Heart right ventricle (tissue), 16 donors: ENCODE measurements at regions of chr1 and their contacts with region 1.

Region 1: DNA sequence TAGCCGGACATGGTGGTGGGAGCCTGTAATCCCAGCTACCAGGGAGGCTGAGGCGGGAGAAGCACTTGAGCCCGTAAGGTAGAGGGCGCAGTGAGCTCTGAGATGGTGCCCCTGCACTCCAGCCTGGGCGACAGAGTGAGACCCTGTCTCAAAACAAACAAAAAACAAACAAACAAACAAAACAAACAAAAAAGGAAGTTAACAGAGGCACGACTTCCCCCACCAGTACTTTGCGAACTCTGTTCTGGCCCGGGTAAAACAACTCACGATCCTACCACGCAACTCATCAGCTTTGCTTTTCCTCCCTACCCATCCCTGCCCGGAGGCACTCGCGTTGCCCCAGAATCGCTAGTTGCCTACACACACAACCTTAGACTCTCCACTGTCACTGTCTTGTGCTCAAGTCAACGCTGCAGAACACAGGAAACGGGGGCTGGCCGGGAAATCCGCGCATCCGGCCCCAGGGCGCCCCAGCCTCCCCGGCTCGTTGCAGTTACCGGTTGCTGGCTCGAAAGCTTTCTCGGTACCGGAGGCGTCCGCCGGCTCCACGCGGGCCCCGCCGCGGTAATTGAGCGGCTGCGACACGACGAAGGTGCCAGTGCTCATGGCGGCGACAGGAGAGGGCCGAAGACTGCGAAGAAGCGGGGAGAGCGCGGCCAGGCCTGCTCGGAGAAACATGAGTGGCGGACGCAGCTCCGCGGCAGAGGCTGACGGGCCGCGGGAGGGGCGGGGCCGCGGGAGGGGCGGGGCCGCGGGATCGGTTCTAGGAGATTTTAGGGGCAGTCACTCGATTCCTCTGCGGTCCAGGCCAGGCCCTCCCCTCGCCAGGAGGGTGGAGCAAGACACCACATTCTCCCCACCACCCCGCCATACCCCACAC is at the start of gene ALDH9A1:
- DNase-seq: peak; percentile 90 to 92
- ATAC-seq: peak; percentile 97 to 99 (median 97)
- H3K4me3 ChIP-seq: peak within 1 kb of the TSS; percentile 39 to 92 (median 81)
- H3K27ac ChIP-seq: peak within 1 kb of the TSS; percentile 92 to 99 (median 95)
- H3K4me1 ChIP-seq: peaks cover 4 to 39% (median 22%) of the 10 kb centered on the region in 9 donors
- H3K27me3 ChIP-seq: no peaks in the 10 kb centered on the region
- CTCF ChIP-seq: peak in 7 of 9 donors; percentile 17 to 59 (median 42)
- total RNA-seq, gene ALDH9A1: 47.3 to 75.3 (median 66.2) TPM

Region 2: GRCh38 chr1:165376041-165376810 is 321.9 kb before region 1 on chr1:
- intact Hi-C with region 1: loop called in 1 of 10 experiments (anchors 10 kb)
- DNase-seq: peak; percentile 86 to 92
- ATAC-seq: peak; percentile 92 to 98 (median 96)
- H3K4me3 ChIP-seq: peak overlapping the region; percentile 21 to 57 (median 49)
- H3K27ac ChIP-seq: peak overlapping the region; percentile 53 to 94 (median 85)
- H3K4me1 ChIP-seq: peaks cover 0 to 36% (median 28%) of the 10 kb centered on the region in 9 donors
- H3K27me3 ChIP-seq: peaks cover 0 to 77% (median 0%) of the 10 kb centered on the region in 7 donors
- CTCF ChIP-seq: no peak

Region 3: GRCh38 chr1:165619647-165620151 is 78.4 kb before region 1 on chr1:
- intact Hi-C with region 1: no loop called
- DNase-seq: no peak
- ATAC-seq: no peak
- H3K4me3 ChIP-seq: no peak overlapping the region
- H3K27ac ChIP-seq: no peak overlapping the region
- H3K4me1 ChIP-seq: no peaks in the 10 kb centered on the region
- H3K27me3 ChIP-seq: no peaks in the 10 kb centered on the region
- CTCF ChIP-seq: no peak

Region 4: GRCh38 chr1:165630629-165631341 is 67.3 kb before region 1 on chr1 and contains the start of gene MGST3:
- intact Hi-C with region 1: loop called in 5 of 10 experiments (anchors 2 to 5 kb)
- DNase-seq: peak; percentile 94 to 97
- ATAC-seq: peak; percentile 97 to 99 (median 98)
- H3K4me3 ChIP-seq: peak within 1 kb of the TSS; percentile 66 to 96 (median 81)
- H3K27ac ChIP-seq: peak within 1 kb of the TSS; percentile 87 to 97 (median 92)
- H3K4me1 ChIP-seq: peaks cover 0 to 47% (median 35%) of the 10 kb centered on the region in 9 donors
- H3K27me3 ChIP-seq: no peaks in the 10 kb centered on the region
- CTCF ChIP-seq: no peak
- total RNA-seq, gene MGST3: 545 to 1,002 (median 844) TPM

Region 5: DNA sequence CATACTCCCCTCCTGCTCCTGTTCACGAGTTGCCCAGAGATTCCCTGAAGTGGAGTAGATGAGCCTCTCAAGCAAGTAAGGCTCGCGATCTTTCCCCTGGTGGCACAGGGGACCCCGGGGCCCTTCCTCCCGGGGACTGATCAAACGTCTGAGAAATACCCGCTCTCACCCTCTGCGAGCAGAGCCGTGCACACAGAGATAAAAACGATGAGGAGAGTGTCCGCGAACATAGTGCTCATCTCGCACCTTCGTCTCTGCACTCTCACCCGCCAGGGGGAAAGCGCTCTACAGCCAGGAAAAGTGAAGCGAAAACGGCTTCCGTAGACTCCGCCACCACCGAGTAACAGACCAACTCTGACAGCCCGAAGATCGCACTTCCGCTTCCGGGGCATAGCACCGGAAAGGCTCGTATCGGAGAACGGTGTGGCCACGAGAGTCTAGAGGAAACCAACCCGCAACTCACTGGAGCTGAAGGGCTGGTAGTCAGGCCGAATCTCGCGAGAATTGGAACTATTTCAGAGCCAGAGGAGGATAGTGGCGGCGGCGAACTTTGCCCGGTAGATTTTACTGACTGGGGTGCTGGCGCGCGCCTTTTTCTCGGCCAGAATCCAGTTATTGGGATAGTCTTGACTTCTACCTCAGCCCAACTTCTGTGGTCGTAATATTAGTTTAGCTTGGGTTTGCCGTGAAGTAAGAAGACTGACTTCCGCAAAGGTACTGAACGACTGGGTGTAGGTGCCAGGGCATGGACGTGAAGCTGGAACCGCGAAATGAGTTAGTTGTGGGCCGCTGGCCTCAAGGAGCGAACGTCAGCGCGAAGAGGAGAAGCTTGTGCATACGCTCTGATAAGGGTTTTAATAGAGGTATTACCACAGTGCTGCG is 70.6 kb after region 1 on chr1 and contains the start of gene TMCO1:
- intact Hi-C with region 1: loop called in 1 of 10 experiments (anchors 1 kb)
- DNase-seq: peak; percentile 88 to 96
- ATAC-seq: peak; percentile 99 to 100 (median 100)
- H3K4me3 ChIP-seq: peak within 1 kb of the TSS; percentile 45 to 99 (median 77)
- H3K27ac ChIP-seq: peak within 1 kb of the TSS; percentile 18 to 95 (median 89)
- H3K4me1 ChIP-seq: peaks cover 0 to 61% (median 31%) of the 10 kb centered on the region in 9 donors
- H3K27me3 ChIP-seq: no peaks in the 10 kb centered on the region
- CTCF ChIP-seq: peak in 6 of 9 donors; percentile 14 to 45 (median 34)
- total RNA-seq, gene TMCO1: 41.1 to 61.3 (median 48.4) TPM

Region 6: DNA sequence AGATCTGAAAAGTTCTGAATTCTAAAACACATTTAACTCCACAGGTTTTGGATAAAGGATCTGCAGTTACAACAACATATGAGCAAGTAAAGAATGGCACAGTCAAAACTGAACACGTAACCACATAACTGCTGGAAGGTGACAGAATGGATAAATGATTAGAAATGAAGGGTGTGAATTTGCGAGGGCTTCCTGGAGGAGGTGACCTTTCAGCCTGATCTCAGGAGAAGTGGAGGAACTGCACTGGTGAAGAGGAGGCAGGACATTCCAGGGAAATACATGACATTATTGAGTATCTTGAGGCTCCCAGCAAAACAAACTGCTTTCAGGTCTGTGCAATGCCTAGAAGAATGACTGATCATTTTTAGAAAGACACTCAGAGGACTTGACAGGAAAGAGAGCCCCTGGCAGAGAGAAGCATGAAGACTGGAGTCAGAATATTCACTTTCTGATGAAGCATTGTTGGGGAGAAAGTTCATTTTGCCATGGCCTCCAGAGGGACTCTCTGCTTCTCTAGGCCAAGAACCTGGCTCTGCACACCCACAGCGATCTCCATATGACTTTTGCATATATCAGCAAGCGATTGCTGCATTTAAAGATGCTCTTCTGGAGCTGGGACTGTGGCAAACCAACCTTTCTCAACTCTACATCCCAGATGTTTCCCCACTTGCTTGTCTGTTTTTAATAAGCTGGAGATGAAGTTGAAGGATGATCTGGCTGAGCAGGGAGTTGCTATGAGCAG is 591.4 kb after region 1 on chr1:
- intact Hi-C with region 1: no loop called
- DNase-seq: no peak
- ATAC-seq: no peak
- H3K4me3 ChIP-seq: no peak overlapping the region
- H3K27ac ChIP-seq: no peak overlapping the region
- H3K4me1 ChIP-seq: no peaks in the 10 kb centered on the region
- H3K27me3 ChIP-seq: no peaks in the 10 kb centered on the region
- CTCF ChIP-seq: no peak